Dorsolateral prefrontal cortex (tissue), 120 donors: ENCODE measurements at regions of chr16 and their contacts with region 1.

Region 1: DNA sequence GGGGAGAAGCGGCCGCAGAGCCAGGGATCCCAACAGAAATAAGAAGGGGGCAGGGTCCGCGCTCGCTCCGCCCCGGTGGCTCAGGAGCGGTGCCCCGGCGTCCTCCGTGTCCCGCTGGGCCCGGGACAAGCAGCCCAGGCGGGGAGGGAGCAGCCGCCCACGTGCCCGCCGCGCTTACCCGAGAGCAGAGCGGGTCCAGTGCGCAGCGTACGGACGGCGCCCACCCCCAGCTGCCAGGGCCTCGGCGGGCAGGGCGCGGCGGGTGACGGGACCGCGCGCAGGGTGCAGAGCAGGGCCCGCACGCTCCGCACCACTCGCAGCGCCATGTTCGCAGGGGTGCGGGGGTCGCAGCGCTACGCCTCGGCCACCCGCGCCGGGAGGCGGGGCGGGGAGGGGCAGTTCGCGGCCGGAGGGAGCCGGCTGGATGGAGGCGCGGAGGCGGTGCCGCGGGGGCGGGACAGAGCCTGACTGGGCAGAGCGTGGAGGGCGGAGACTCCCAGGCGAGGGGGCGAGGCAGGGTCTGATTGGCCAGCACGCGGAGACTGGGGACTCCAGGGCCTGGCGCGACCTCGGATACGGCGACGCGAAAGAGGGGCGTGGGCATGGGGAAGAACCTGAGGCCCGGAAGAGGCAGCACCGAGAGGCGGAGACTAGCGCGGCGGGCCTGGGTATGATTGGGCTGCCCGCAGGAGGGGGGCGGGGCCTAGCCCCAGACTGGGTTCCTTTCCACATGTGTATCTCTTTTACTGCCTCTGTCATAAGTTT is at the start of gene GCSH:
- DNase-seq: peak; percentile 97 to 100 (median 99)
- H3K4me3 ChIP-seq: peak within 1 kb of the TSS; percentile 61 to 98 (median 88)
- H3K27ac ChIP-seq: peak within 1 kb of the TSS in 53 of 59 donors; percentile 9 to 90 (median 71)
- H3K27me3 ChIP-seq: no peaks in the 10 kb centered on the region
- CTCF ChIP-seq: peak in 33 of 56 donors; percentile 11 to 56 (median 26)
- total RNA-seq, gene GCSH: 28.2 to 78.2 (median 45.7) TPM

Region 2: GRCh38 chr16:81006814-81007696 is 89.1 kb before region 1 on chr16 and contains the starts of genes CENPN and CMC2:
- intact Hi-C with region 1: loop called in 1 of 2 experiments (anchors 2 kb)
- DNase-seq: peak; percentile 98 to 99 (median 99)
- H3K4me3 ChIP-seq: peak within 1 kb of the TSS; percentile 63 to 100 (median 97)
- H3K27ac ChIP-seq: peak within 1 kb of the TSS; percentile 94 to 100 (median 100)
- H3K27me3 ChIP-seq: no peaks in the 10 kb centered on the region
- CTCF ChIP-seq: peak in 27 of 56 donors; percentile 8 to 42 (median 28)
- total RNA-seq, gene CENPN: 2.4 to 13.8 (median 6.3) TPM
- total RNA-seq, gene CMC2: 53.6 to 107 (median 84.9) TPM

Region 3: GRCh38 chr16:81077076-81077940 is 18.8 kb before region 1 on chr16 and contains the start of gene C16orf46:
- intact Hi-C with region 1: loop called (anchors 1 kb)
- DNase-seq: peak; percentile 98 to 100 (median 99)
- H3K4me3 ChIP-seq: peak within 1 kb of the TSS; percentile 54 to 100 (median 85)
- H3K27ac ChIP-seq: peak within 1 kb of the TSS; percentile 65 to 99 (median 95)
- H3K27me3 ChIP-seq: no peaks in the 10 kb centered on the region
- CTCF ChIP-seq: peak in 26 of 56 donors; percentile 6 to 54 (median 21)
- total RNA-seq, gene C16orf46: 0.69 to 11.8 (median 6.2) TPM

Region 4: GRCh38 chr16:81130126-81130525 is 34.0 kb after region 1 on chr16:
- intact Hi-C with region 1: loop called in 1 of 2 experiments (anchors 5 kb)
- DNase-seq: no peak
- H3K4me3 ChIP-seq: no peak overlapping the region
- H3K27ac ChIP-seq: no peak overlapping the region
- H3K27me3 ChIP-seq: no peaks in the 10 kb centered on the region
- CTCF ChIP-seq: no peak

Region 5: DNA sequence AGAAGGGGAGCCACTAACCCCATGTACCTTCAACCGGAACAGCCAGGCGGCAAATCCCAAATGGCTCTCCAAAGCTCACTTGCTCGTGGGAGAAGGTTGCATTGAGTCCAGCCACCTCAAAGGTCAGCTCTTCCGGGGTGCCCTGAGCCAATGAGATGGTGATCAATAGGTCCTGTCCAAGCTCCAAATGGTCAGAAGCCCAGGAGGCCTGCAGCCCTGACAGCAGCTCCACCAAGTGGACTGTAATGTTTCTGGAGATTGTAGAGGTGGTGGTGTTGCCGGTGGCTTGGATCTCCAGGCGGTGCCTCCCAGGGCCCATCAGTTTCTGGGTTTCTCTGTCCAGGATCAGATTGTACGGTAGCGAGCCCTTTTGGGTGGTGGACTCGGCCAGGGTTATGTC is 102.5 kb after region 1 on chr16:
- intact Hi-C with region 1: loop called (anchors 5 kb)
- DNase-seq: peak in 4 of 10 donors; percentile 28 to 54 (median 39)
- H3K4me3 ChIP-seq: peak overlapping the region in 17 of 59 donors; percentile 2 to 53 (median 29)
- H3K27ac ChIP-seq: peak overlapping the region in 12 of 59 donors; percentile 3 to 64 (median 30)
- H3K27me3 ChIP-seq: peaks cover 0 to 3% (median 0%) of the 10 kb centered on the region in 45 donors
- CTCF ChIP-seq: peak in 44 of 56 donors; percentile 11 to 65 (median 39)

Region 6: DNA sequence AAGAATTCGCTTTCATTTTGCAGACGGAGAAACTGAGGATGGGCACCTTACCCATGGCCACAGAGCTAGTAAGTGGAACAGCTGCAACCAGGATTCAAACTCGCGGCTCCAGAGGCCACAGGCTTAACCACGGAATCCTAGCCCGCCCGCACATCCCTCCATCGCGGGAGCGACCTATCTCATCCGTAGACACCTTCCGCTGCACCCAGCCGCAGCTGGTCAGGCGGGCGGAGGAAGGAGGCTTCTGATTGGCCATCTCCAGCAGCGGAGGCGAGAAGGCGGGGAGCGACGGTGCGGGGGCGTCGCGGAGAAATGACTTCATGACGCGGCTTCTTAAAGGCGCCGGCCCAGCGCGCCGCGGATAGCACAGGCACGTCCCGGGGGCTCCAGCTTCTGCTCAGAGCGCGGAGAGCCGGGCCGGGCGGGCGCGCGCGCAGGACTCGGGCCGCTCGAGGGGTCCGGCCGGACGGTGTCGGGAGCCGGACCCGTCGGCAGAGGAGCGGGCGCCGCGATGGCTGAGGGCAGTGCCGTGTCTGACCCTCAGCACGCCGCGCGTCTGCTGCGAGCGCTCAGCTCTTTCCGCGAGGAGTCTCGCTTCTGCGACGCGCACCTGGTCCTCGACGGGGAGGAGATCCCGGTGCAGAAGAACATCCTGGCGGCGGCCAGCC is 218.6 kb after region 1 on chr16 and contains the start of gene GAN:
- intact Hi-C with region 1: loop called in 1 of 2 experiments (anchors 10 kb)
- DNase-seq: peak; percentile 91 to 98 (median 96)
- H3K4me3 ChIP-seq: peak within 1 kb of the TSS; percentile 64 to 98 (median 88)
- H3K27ac ChIP-seq: peak within 1 kb of the TSS in 57 of 59 donors; percentile 9 to 91 (median 77)
- H3K27me3 ChIP-seq: no peaks in the 10 kb centered on the region
- CTCF ChIP-seq: peak in 36 of 56 donors; percentile 5 to 59 (median 23)
- total RNA-seq, gene GAN: 31.2 to 66.5 (median 46.5) TPM